ENCODE measurements at regions of chr12 and their contacts with region 1.

Region 1: DNA sequence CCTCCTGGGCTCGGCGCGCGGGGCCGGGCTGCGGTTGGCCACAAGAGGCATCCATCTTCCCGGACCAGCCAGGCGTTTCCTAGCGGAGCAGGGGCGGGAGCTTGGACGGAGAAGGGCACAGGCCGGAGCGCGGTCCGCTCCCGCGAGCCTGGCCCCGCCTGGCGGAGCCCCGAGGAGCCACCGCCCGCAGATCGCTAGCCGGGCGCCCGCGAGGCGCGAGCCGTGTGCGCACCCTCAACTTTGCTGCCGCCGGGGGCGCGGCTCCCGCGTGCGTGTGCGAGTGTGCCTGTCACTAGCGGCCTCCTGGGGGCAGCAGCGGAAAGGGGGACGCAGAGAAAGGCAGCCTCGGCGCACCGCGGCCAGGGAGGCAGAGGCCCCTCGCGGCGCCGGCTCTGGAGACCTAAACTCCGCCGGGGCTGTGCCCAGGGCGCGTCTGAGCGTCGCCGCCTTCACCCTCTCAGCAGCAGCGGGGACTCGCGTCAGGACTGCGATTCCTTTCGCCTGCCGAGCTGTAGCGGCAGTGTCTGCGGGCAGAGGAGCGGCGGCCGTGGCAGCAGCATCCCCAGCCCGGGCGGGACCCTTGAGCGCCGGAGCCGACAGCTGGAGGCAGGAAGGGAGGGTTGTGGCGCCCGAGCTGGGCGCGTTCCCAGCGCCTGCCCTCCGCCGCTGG is 644 bp upstream of the SRGAP1 start:
- DNase-seq: peak; percentile 75 to 92 (median 85)
- H3K4me3 ChIP-seq: peak overlapping the region; percentile 58 to 99 (median 91)
- H3K27ac ChIP-seq: peak overlapping the region; percentile 55 to 97 (median 93)
- H3K27me3 ChIP-seq: no peaks in the 10 kb centered on the region
- CTCF ChIP-seq: peak; percentile 76 to 99 (median 93)

Region 2: DNA sequence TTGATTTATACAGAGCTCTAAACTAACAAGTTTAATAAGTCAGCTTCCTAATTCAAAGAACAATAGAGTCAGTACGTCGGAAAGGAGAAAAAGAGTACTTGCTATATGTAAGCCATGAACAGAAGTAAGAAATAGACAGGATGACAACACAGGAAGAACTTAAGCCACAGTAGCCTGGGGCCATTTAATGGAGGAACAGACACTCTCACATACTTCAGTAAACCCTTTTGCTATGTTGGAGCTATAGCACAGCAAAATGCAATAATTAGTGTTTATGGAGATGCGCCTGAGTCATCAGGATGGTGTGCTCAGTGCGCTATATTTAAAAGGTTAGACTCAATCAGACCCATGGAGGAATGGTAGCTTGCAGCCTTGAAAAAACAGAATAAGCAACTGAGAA is 61.7 kb after region 1 on chr12:
- intact Hi-C with region 1: no loop called
- DNase-seq: no peak
- H3K4me3 ChIP-seq: no peak overlapping the region
- H3K27ac ChIP-seq: no peak overlapping the region
- H3K27me3 ChIP-seq: no peaks in the 10 kb centered on the region
- CTCF ChIP-seq: no peak

Region 3: DNA sequence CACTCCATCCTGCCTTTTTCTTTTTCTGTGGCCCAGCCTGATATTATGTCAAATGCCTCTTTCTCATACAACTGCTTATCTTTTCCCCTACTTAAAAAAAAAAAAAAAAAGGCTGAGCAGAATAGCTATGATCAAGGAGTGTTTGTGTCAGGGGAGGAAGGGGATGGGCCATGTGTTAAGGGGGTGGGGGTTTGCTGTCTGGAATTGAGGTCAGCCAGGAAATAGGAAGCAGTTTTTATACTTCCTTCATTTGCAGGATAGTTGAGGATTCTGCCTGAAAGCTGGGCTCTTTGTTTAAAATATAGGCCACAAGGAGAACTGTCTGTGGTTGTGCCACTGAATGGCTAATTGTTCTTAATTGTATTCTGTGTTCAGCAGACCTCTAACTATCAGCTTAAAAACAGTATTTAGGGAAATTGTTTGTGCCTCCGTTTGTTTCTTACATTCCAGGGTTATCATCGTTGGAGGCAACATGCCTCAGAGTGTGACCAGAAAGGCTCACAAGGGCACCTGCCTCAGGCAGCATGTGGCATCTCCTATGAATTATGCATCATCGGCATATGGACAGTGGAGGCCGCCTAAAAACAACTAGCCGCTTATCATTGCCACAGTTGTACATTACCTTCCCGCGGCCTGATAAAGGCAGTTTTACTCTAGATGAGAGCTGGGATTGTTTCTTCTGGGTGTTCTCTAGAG is 96.6 kb after region 1 on chr12:
- intact Hi-C with region 1: loop called (anchors 5 kb)
- DNase-seq: peak in 1 of 10 donors; percentile 45
- H3K4me3 ChIP-seq: peak overlapping the region in 38 of 59 donors; percentile 1 to 42 (median 22)
- H3K27ac ChIP-seq: peak overlapping the region; percentile 46 to 93 (median 83)
- H3K27me3 ChIP-seq: no peaks in the 10 kb centered on the region
- CTCF ChIP-seq: peak in 3 of 56 donors; percentile 1 to 29 (median 5)

Region 4: DNA sequence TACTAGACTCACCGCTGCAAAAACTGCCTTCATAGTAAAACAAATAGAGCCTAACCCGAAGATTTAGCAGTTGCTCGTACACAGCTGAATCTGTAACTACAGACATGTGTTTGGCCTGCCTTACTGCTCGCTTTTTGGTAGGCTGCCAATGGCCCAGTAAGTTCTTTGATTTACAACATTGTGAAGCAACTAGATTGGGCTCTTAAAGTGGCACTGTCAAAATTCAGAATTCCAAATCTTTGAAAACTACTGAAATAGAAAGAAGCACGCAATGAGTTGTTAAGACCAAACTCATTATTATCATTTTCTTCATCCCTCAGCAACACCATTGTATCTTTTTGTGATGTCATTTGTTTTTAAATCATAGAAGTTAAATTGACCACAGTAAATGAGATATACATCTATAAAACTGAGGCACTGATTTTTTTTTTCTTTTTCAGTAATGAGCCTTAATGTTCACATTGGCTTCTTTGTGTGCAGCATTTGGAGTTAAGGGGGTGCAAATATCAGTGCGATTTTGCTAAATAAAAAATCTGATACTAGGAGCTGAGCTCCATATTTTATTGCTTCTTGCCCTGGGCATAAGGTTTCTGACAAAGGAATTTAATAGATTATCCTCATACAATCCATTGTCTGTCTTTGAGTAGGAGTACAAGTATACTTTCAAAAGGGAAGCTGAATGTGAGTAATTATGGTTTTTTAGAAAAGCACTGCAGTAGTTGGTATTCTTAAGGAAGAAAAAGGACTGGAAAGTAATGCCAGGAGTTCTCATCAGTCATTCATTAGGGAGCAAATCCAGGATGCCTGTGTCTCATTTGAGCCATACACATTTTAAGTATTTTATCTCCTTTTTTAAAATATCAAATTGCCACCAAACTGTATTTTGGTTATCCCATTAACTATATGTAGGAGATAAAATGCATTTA is 239.7 kb after region 1 on chr12:
- intact Hi-C with region 1: loop called in 1 of 2 experiments (anchors 1 kb)
- DNase-seq: peak in 9 of 10 donors; percentile 50 to 86 (median 67)
- H3K4me3 ChIP-seq: peak overlapping the region in 34 of 59 donors; percentile 4 to 44 (median 17)
- H3K27ac ChIP-seq: peak overlapping the region in 57 of 59 donors; percentile 4 to 84 (median 68)
- H3K27me3 ChIP-seq: no peaks in the 10 kb centered on the region
- CTCF ChIP-seq: peak in 3 of 56 donors; percentile 8 to 28 (median 15)

Region 5: GRCh38 chr12:64222009-64222765 is 378.3 kb after region 1 on chr12 and contains the start of gene KICS2:
- intact Hi-C with region 1: loop called in 1 of 2 experiments (anchors 2 kb)
- DNase-seq: peak; percentile 82 to 94 (median 91)
- H3K4me3 ChIP-seq: peak within 1 kb of the TSS; percentile 69 to 99 (median 89)
- H3K27ac ChIP-seq: peak within 1 kb of the TSS; percentile 81 to 99 (median 96)
- H3K27me3 ChIP-seq: no peaks in the 10 kb centered on the region
- CTCF ChIP-seq: peak in 36 of 56 donors; percentile 5 to 59 (median 30)
- total RNA-seq, gene KICS2: 9.5 to 27.3 (median 14.3) TPM

Region 6: GRCh38 chr12:64403707-64404469 is 560.0 kb after region 1 on chr12 and contains the start of gene XPOT:
- intact Hi-C with region 1: loop called (anchors 5 kb)
- DNase-seq: peak; percentile 77 to 94 (median 91)
- H3K4me3 ChIP-seq: peak within 1 kb of the TSS; percentile 62 to 99 (median 91)
- H3K27ac ChIP-seq: peak within 1 kb of the TSS; percentile 79 to 99 (median 95)
- H3K27me3 ChIP-seq: no peaks in the 10 kb centered on the region
- CTCF ChIP-seq: peak in 37 of 56 donors; percentile 6 to 54 (median 31)
- total RNA-seq, gene XPOT: 47.3 to 92.9 (median 68.0) TPM

Measured in dorsolateral prefrontal cortex (tissue), 120 donors.